ENCODE measurements at regions of chr4 and their contacts with region 1.

Region 1: GRCh38 chr4:56977321-56978012 is at the start of gene NOA1:
- DNase-seq: peak; percentile 95 to 99 (median 96)
- ATAC-seq: peak; percentile 80
- H3K4me3 ChIP-seq: peak within 1 kb of the TSS; percentile 99
- H3K4me3 Mint-ChIP-seq: peak within 1 kb of the TSS; percentile 96
- H3K27ac ChIP-seq: peak within 1 kb of the TSS; percentile 73 to 92
- H3K27ac Mint-ChIP-seq: peak within 1 kb of the TSS; percentile 95
- H3K4me1 ChIP-seq: peaks cover 54% of the 10 kb centered on the region
- H3K4me1 Mint-ChIP-seq: peaks cover 70% of the 10 kb centered on the region
- H3K27me3 ChIP-seq: no peaks in the 10 kb centered on the region
- H3K27me3 Mint-ChIP-seq: no peaks in the 10 kb centered on the region
- CTCF ChIP-seq: no peak
- total RNA-seq, gene NOA1: 14.3 to 15.6 TPM

Region 2: GRCh38 chr4:55853484-55854046 is 1123.9 kb before region 1 on chr4 and contains the start of gene EXOC1:
- CTCF ChIA-PET with region 1: no interaction called
- POLR2A ChIA-PET with region 1: interaction called, 3 read pairs
- intact Hi-C with region 1: loop called in 1 of 2 experiments (anchors 10 kb)
- DNase-seq: peak; percentile 93 to 99 (median 97)
- ATAC-seq: peak; percentile 95
- H3K4me3 ChIP-seq: peak within 1 kb of the TSS; percentile 96
- H3K4me3 Mint-ChIP-seq: no peak within 1 kb of the TSS
- H3K27ac ChIP-seq: peak within 1 kb of the TSS; percentile 68 to 86
- H3K27ac Mint-ChIP-seq: peak within 1 kb of the TSS; percentile 60
- H3K4me1 ChIP-seq: peaks cover 28% of the 10 kb centered on the region
- H3K4me1 Mint-ChIP-seq: peaks cover 33% of the 10 kb centered on the region
- H3K27me3 ChIP-seq: no peaks in the 10 kb centered on the region
- H3K27me3 Mint-ChIP-seq: no peaks in the 10 kb centered on the region
- CTCF ChIP-seq: no peak
- total RNA-seq, gene EXOC1: 15.2 to 15.7 TPM

Region 3: DNA sequence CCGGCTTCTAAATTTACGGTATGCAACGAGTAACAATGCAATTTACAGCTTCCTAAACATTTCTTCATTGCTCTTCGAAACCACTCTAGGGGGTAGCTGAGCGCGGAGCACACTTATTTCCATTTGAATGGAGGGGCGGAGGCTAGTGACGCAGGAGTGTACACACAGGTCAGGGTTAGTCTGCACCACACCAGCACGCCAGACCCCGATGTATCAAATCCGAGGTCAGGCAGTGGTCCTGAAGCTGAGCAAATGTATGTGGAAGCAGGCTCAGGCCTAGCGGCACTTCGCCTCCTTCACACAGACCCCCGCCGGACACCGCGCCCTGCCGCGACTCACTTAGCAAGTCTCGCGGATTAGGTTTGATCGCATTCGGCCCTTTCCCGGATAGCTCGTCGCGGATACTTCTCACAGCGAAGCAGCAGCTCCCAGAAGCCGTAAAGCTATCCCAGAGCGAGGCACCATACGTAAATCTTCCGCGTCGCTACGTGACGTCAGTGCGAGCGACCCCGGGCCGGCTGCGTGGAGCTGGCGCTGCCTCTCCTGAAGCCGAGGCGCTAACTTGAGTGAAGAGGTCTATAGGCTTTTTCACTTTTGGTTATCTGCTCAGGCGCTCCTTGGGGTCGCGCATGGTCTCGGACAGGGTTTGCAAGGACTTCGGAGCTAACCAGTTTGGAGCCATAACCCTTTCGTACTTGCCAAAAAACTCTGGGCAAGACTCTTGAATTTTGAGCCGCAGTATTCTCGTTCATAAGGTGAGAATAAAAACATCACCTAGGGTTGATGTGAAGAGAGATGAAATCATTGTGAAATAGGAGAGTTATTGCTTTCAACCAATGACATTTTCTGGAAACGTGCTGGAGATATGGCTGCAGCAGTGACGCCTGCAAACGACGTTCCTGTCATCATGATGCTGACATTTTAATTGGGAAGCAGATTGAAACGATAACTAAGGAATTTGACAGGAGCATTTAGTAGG is 590.2 kb before region 1 on chr4 and contains the start of gene AASDH:
- CTCF ChIA-PET with region 1: interaction called, 3 read pairs
- POLR2A ChIA-PET with region 1: interaction called, 37 read pairs
- intact Hi-C with region 1: loop called (anchors 1 to 5 kb)
- DNase-seq: peak; percentile 85 to 99 (median 96)
- ATAC-seq: peak; percentile 86
- H3K4me3 ChIP-seq: peak within 1 kb of the TSS; percentile 97
- H3K4me3 Mint-ChIP-seq: peak within 1 kb of the TSS; percentile 93
- H3K27ac ChIP-seq: peak within 1 kb of the TSS; percentile 91 to 97
- H3K27ac Mint-ChIP-seq: peak within 1 kb of the TSS; percentile 99
- H3K4me1 ChIP-seq: peaks cover 17% of the 10 kb centered on the region
- H3K4me1 Mint-ChIP-seq: peaks cover 46% of the 10 kb centered on the region
- H3K27me3 ChIP-seq: no peaks in the 10 kb centered on the region
- H3K27me3 Mint-ChIP-seq: no peaks in the 10 kb centered on the region
- CTCF ChIP-seq: no peak
- total RNA-seq, gene AASDH: 10.2 to 10.6 TPM

Region 4: DNA sequence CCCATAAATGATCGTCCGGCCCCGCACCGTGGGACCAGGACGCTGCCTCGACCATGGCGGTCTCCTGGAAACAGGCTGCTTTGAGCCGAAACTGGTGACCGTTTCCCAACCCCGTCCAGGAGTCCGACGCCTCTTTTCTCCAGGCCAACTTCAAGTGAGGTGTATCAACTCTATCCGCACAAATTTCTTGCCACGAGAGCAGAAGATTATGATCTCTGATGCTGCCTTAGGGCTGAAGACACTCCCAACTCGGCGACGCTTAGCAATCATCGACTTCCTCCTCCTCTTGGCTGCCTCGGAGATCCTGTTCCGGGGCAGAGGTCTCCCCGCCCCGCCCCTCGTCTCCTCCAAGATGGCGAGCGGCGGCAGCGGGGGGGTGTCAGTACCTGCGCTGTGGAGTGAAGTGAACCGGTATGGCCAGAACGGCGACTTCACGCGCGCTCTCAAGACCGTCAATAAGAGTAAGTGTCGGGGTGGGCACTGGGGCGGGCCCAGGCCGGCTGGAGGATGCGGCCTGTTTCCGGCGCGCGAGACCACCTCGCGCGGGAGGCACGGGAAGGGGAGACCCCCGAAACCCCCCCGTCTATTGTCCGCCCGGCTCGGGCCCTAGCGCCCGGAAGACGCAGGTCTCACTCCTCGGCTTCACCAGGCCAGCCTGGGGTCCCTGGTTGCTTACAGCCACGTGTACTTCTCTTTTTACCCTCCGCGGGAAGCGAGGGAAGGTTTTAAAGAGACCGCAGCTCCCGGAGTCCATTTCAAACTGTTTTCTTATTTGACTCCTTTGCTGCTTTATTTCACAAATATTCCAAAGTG is 510.0 kb before region 1 on chr4 and contains the start of gene SRP72:
- CTCF ChIA-PET with region 1: no interaction called
- POLR2A ChIA-PET with region 1: interaction called, 13 read pairs
- intact Hi-C with region 1: loop called in 1 of 2 experiments (anchors 10 kb)
- DNase-seq: peak; percentile 82 to 96 (median 87)
- ATAC-seq: peak; percentile 95
- H3K4me3 ChIP-seq: peak within 1 kb of the TSS; percentile 93
- H3K4me3 Mint-ChIP-seq: peak within 1 kb of the TSS; percentile 95
- H3K27ac ChIP-seq: peak within 1 kb of the TSS; percentile 84 to 94
- H3K27ac Mint-ChIP-seq: peak within 1 kb of the TSS; percentile 96
- H3K4me1 ChIP-seq: peaks cover 26% of the 10 kb centered on the region
- H3K4me1 Mint-ChIP-seq: peaks cover 66% of the 10 kb centered on the region
- H3K27me3 ChIP-seq: no peaks in the 10 kb centered on the region
- H3K27me3 Mint-ChIP-seq: no peaks in the 10 kb centered on the region
- CTCF ChIP-seq: no peak
- total RNA-seq, gene SRP72: 108 to 119 TPM

Region 5: GRCh38 chr4:56757821-56758411 is 219.6 kb before region 1 on chr4:
- CTCF ChIA-PET with region 1: no interaction called
- POLR2A ChIA-PET with region 1: interaction called, 11 read pairs
- intact Hi-C with region 1: no loop called
- DNase-seq: peak; percentile 35 to 85 (median 58)
- ATAC-seq: peak; percentile 81
- H3K4me3 ChIP-seq: peak overlapping the region; percentile 36
- H3K4me3 Mint-ChIP-seq: peak overlapping the region; percentile 83
- H3K27ac ChIP-seq: peak overlapping the region; percentile 71 to 75
- H3K27ac Mint-ChIP-seq: peak overlapping the region; percentile 89
- H3K4me1 ChIP-seq: peaks cover 44% of the 10 kb centered on the region
- H3K4me1 Mint-ChIP-seq: peaks cover 62% of the 10 kb centered on the region
- H3K27me3 ChIP-seq: no peaks in the 10 kb centered on the region
- H3K27me3 Mint-ChIP-seq: no peaks in the 10 kb centered on the region
- CTCF ChIP-seq: no peak

Region 6: GRCh38 chr4:56799824-56800756 is 177.4 kb before region 1 on chr4:
- CTCF ChIA-PET with region 1: no interaction called
- POLR2A ChIA-PET with region 1: no interaction called
- intact Hi-C with region 1: no loop called
- DNase-seq: peak; percentile 73 to 92 (median 79)
- ATAC-seq: peak; percentile 98
- H3K4me3 ChIP-seq: peak overlapping the region; percentile 89
- H3K4me3 Mint-ChIP-seq: peak overlapping the region; percentile 95
- H3K27ac ChIP-seq: peak overlapping the region; percentile 26 to 30
- H3K27ac Mint-ChIP-seq: peak overlapping the region; percentile 90
- H3K4me1 ChIP-seq: peaks cover 12% of the 10 kb centered on the region
- H3K4me1 Mint-ChIP-seq: peaks cover 31% of the 10 kb centered on the region
- H3K27me3 ChIP-seq: no peaks in the 10 kb centered on the region
- H3K27me3 Mint-ChIP-seq: no peaks in the 10 kb centered on the region
- CTCF ChIP-seq: peak; percentile 87

Region 7: DNA sequence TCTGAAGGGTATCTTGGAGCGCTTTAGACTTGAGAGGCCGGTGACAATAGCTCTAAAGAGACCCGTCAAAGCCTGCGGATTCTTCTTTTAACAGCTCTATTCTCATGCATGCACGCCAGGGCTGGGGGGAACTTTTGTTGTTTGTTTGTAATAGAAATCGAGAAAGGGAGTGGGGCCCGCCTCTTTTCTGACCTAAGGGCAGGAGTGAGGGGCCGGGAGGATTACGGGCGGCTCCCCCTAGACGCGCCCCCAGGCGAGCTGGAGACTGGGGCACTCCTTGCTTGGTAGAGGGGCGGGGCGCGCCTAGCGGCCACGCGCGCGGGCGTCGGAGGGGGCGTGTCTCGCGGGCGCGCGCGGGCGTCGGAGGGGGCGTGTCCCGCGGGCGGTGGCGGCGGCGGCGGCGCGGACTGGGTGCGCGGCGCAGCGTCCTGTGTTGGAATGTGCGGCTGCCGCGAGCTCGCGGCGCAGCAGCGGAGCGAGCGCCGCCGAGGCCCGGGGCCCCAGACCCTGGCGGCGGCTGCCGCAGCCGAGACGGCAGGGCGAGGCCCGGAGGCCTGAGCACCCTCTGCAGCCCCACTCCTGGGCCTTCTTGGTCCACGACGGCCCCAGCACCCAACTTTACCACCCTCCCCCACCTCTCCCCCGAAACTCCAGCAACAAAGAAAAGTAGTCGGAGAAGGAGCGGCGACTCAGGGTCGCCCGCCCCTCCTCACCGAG is 69.8 kb before region 1 on chr4 and contains the start of gene REST:
- CTCF ChIA-PET with region 1: interaction called, 34 read pairs
- POLR2A ChIA-PET with region 1: interaction called, 222 read pairs
- intact Hi-C with region 1: loop called (anchors 1 to 2 kb)
- DNase-seq: peak; percentile 68 to 95 (median 82)
- ATAC-seq: peak; percentile 64
- H3K4me3 ChIP-seq: peak within 1 kb of the TSS; percentile 98
- H3K4me3 Mint-ChIP-seq: peak within 1 kb of the TSS; percentile 92
- H3K27ac ChIP-seq: peak within 1 kb of the TSS; percentile 22 to 94
- H3K27ac Mint-ChIP-seq: peak within 1 kb of the TSS; percentile 84
- H3K4me1 ChIP-seq: peaks cover 33% of the 10 kb centered on the region
- H3K4me1 Mint-ChIP-seq: peaks cover 52% of the 10 kb centered on the region
- H3K27me3 ChIP-seq: no peaks in the 10 kb centered on the region
- H3K27me3 Mint-ChIP-seq: no peaks in the 10 kb centered on the region
- CTCF ChIP-seq: no peak
- total RNA-seq, gene REST: 56.8 to 57.6 TPM

Region 8: GRCh38 chr4:56990109-56990905 is 12.8 kb after region 1 on chr4:
- CTCF ChIA-PET with region 1: interaction called, 3 read pairs
- POLR2A ChIA-PET with region 1: interaction called, 25 read pairs
- intact Hi-C with region 1: no loop called
- DNase-seq: no peak
- ATAC-seq: no peak
- H3K4me3 ChIP-seq: no peak overlapping the region
- H3K4me3 Mint-ChIP-seq: no peak overlapping the region
- H3K27ac ChIP-seq: no peak overlapping the region
- H3K27ac Mint-ChIP-seq: peak overlapping the region; percentile 53
- H3K4me1 ChIP-seq: peaks cover 4% of the 10 kb centered on the region
- H3K4me1 Mint-ChIP-seq: peaks cover 43% of the 10 kb centered on the region
- H3K27me3 ChIP-seq: no peaks in the 10 kb centered on the region
- H3K27me3 Mint-ChIP-seq: no peaks in the 10 kb centered on the region
- CTCF ChIP-seq: no peak